Activated naive CD4-positive, alpha-beta T cell treated with anti-CD3 and anti-CD28 coated beads, Interleukin-2, amount 10 ng/mL, durations not matched to agents 7 days and 5 days (primary cell): ENCODE measurements at regions of chr5 and their contacts with region 1.

Region 1: GRCh38 chr5:141960449-141961202 is 2.6 kb upstream of the PCDH12 start:
- DNase-seq: peak; percentile 95
- H3K4me3 Mint-ChIP-seq: peak overlapping the region; percentile 24
- H3K27ac Mint-ChIP-seq: peak overlapping the region; percentile 90
- H3K4me1 Mint-ChIP-seq: peaks cover 53% of the 10 kb centered on the region
- H3K27me3 Mint-ChIP-seq: peaks cover 8% of the 10 kb centered on the region

Region 2: GRCh38 chr5:141691867-141692532 is 268.6 kb before region 1 on chr5:
- CTCF ChIA-PET with region 1: interaction called, 155 read pairs
- DNase-seq: peak; percentile 90
- H3K4me3 Mint-ChIP-seq: peak overlapping the region; percentile 31
- H3K27ac Mint-ChIP-seq: no peak overlapping the region
- H3K4me1 Mint-ChIP-seq: peaks cover 27% of the 10 kb centered on the region
- H3K27me3 Mint-ChIP-seq: peaks cover 58% of the 10 kb centered on the region

Region 3: GRCh38 chr5:141878711-141879425 is 81.8 kb before region 1 on chr5:
- CTCF ChIA-PET with region 1: interaction called, 120 read pairs
- DNase-seq: peak; percentile 92
- H3K4me3 Mint-ChIP-seq: peak overlapping the region; percentile 48
- H3K27ac Mint-ChIP-seq: no peak overlapping the region
- H3K4me1 Mint-ChIP-seq: peaks cover 22% of the 10 kb centered on the region
- H3K27me3 Mint-ChIP-seq: peaks cover 99% of the 10 kb centered on the region

Region 4: DNA sequence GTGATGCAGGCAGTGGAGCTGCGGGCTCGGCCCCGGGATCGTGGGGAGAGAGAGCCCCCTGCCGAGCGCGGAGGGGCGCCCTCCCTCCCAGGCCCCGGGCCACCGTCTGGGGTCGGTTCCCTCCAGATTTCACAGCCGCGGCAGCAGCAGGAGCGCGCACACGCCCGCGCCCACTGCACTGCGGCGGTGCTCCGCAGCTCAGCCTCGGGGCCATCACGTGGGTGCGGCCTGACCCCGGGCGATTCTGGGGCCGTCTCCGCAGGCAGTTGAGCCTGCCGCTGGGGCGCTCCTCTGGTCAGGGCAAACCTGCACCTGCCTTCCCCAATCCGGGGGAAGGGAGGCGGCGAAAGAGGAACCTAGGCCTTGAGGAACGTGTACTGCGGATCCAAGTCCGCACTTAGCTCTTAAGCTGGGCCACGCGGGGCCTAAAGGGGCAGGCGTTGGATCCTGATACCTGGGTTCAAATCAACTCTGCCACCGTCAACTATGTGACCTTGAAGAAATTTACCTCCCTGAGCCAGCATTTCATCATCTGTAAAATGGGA is 46.4 kb before region 1 on chr5:
- CTCF ChIA-PET with region 1: interaction called, 14 read pairs
- DNase-seq: peak; percentile 27
- H3K4me3 Mint-ChIP-seq: no peak overlapping the region
- H3K27ac Mint-ChIP-seq: no peak overlapping the region
- H3K4me1 Mint-ChIP-seq: peaks cover 14% of the 10 kb centered on the region
- H3K27me3 Mint-ChIP-seq: peaks cover 71% of the 10 kb centered on the region

Region 5: GRCh38 chr5:141940695-141941271 is 19.8 kb before region 1 on chr5:
- CTCF ChIA-PET with region 1: interaction called, 39 read pairs
- DNase-seq: no peak
- H3K4me3 Mint-ChIP-seq: no peak overlapping the region
- H3K27ac Mint-ChIP-seq: peak overlapping the region; percentile 33
- H3K4me1 Mint-ChIP-seq: peaks cover 10% of the 10 kb centered on the region
- H3K27me3 Mint-ChIP-seq: no peaks in the 10 kb centered on the region

Region 6: DNA sequence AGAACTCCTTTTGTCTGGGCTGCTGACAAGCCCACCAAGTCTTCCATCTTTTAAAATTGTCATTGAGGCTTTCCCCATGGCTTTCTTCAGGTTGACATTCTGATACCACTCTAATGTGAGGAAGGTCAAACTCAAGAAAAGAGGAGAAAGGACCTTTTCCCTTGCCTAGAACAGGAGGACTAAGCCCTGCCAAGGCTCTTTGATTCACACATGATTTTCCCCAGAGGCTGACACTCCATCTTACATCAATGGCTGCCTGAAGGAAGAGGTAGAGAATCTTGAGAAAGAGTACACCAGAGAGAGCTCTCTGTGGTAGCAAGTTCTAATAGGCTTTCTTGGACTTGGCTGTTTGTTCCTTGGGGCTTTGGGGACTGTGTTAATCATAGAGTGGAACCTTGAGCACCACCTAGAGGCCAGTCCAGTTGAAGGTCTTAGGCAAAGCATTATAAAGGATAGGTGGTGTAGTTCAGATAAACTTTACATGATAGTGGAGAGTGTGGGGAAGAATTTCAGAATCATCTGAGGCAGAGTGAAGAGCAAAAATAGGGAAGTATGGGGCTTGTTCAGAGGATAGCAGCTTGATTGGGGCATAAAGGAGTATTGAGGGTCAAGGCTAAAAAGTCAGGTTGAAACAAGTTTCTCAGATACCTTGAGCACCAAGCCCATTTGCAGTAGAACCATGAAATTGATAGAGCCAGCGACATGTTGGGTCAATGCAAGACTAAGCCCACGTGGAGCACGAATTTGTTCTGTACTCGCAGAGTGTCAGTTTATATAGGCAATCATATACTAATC is 184.7 kb after region 1 on chr5:
- CTCF ChIA-PET with region 1: interaction called, 12 read pairs
- DNase-seq: peak; percentile 78
- H3K4me3 Mint-ChIP-seq: no peak overlapping the region
- H3K27ac Mint-ChIP-seq: no peak overlapping the region
- H3K4me1 Mint-ChIP-seq: no peaks in the 10 kb centered on the region
- H3K27me3 Mint-ChIP-seq: no peaks in the 10 kb centered on the region